MCF 10A (cell line): ENCODE measurements at regions of chr7 and their contacts with region 1.

Region 1: GRCh38 chr7:46932676-46933424 is 649.1 kb downstream of the TNS3 start:
- DNase-seq: peak; percentile 96
- H3K4me3 Mint-ChIP-seq: peak overlapping the region; percentile 12
- H3K27ac Mint-ChIP-seq: peak overlapping the region; percentile 86
- H3K4me1 Mint-ChIP-seq: peaks cover 46% of the 10 kb centered on the region
- H3K27me3 Mint-ChIP-seq: no peaks in the 10 kb centered on the region
- CTCF ChIP-seq: peak; percentile 48

Region 2: DNA sequence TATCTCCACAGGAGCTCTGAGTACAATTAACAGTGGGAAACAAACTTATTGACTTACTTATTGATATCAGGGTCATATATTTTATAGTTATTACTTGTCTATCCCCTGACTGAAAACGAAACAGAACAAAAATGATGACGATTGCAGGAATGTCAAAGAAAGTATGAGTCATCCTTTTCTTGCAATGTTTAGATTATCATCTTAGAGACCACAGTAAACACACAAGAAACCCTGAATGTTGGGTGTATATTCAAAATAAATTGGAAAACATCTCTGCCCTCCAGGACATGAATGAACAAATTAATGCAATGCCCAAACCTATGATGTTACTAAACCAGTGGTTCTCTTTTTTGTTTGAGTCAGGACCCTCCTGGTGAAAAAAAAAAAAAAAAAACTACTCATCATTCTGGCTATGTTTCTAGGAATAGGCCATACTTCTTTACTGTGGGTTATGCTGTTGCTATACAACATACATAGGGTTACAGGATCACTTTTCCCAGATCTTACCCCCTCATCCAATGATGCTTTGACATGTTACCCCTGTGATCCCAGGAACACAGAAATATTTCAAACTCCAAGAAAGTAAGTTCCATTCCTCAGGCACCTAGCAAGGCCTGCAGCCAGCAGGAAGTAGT is 388.4 kb before region 1 on chr7:
- CTCF ChIA-PET with region 1: interaction called, 4 read pairs
- POLR2A ChIA-PET with region 1: no interaction called
- intact Hi-C with region 1: loop called (anchors 2 kb)
- DNase-seq: peak; percentile 72
- H3K4me3 Mint-ChIP-seq: no peak overlapping the region
- H3K27ac Mint-ChIP-seq: peak overlapping the region; percentile 96
- H3K4me1 Mint-ChIP-seq: peaks cover 13% of the 10 kb centered on the region
- H3K27me3 Mint-ChIP-seq: no peaks in the 10 kb centered on the region
- CTCF ChIP-seq: no peak

Region 3: DNA sequence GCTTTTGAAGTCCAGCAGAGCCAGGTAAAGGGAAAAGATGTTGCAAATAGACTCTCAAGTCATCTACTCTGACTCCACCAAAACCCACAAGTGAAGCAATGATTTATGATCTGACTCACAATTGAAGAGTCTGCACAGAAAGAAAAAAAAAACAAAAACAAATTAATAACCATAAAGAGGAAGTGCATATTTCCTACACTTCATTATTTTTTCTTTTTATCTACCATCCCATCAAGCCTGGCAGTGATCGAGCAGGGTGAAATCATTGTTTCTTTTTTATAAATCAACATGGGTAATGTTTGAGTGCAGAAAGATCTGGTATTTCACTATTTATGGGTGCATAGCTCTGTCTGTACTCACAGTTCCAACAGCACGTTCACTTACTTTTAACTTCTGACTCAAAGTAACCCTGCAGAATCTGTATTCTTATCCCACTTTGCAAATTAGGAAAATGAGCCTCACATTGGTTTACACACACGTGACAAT is 179.9 kb before region 1 on chr7:
- CTCF ChIA-PET with region 1: no interaction called
- POLR2A ChIA-PET with region 1: interaction called, 16 read pairs
- intact Hi-C with region 1: loop called (anchors 2 kb)
- DNase-seq: peak; percentile 88
- H3K4me3 Mint-ChIP-seq: no peak overlapping the region
- H3K27ac Mint-ChIP-seq: peak overlapping the region; percentile 47
- H3K4me1 Mint-ChIP-seq: peaks cover 42% of the 10 kb centered on the region
- H3K27me3 Mint-ChIP-seq: no peaks in the 10 kb centered on the region
- CTCF ChIP-seq: no peak

Region 4: GRCh38 chr7:46909601-46910051 is 23.2 kb before region 1 on chr7:
- CTCF ChIA-PET with region 1: interaction called, 4 read pairs
- POLR2A ChIA-PET with region 1: interaction called, 13 read pairs
- intact Hi-C with region 1: no loop called
- DNase-seq: peak; percentile 77
- H3K4me3 Mint-ChIP-seq: no peak overlapping the region
- H3K27ac Mint-ChIP-seq: peak overlapping the region; percentile 4
- H3K4me1 Mint-ChIP-seq: peaks cover 34% of the 10 kb centered on the region
- H3K27me3 Mint-ChIP-seq: no peaks in the 10 kb centered on the region
- CTCF ChIP-seq: no peak

Region 5: DNA sequence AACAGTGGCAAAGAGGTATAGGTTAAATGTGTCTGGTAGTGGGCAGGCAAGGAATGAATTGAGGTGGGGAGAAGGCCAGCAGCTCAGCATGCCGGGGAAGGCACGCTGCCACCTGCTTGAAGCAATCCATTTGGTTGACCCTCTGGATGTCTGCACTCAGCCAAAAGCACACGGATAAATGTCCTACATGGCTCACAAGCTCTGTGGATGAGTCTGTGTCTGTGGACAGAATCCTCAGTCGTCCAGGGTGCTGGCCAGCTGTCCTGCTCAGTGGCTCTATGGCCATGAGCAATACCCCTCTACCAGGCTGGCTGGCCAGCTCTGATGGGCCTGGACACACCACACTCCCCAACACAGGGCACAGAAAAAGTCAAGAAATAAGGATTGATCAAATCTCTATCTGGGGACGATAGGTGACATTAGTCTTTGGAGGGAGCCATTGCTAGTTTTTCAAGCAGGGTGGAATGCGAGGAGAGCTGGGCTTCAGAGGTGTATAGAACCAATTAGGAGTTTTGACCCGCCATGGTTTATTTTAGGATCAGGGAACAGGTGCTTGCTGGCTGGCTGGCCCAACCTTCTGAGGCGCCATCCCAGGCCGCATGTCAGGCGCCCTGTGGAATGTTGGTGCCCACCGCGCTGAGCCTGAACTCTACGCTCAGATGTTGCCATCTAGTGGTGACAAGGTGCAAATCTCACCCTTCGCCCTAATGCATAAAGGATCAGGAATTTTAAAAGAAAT is 155.6 kb after region 1 on chr7:
- CTCF ChIA-PET with region 1: interaction called, 3 read pairs
- POLR2A ChIA-PET with region 1: interaction called, 4 read pairs
- intact Hi-C with region 1: loop called (anchors 1 kb)
- DNase-seq: peak; percentile 64
- H3K4me3 Mint-ChIP-seq: no peak overlapping the region
- H3K27ac Mint-ChIP-seq: peak overlapping the region; percentile 52
- H3K4me1 Mint-ChIP-seq: peaks cover 13% of the 10 kb centered on the region
- H3K27me3 Mint-ChIP-seq: no peaks in the 10 kb centered on the region
- CTCF ChIP-seq: peak; percentile 87